Activated CD8-positive, alpha-beta memory T cell treated with anti-CD3 and anti-CD28 coated beads, Interleukin-2, amount 10 ng/mL, durations not matched to agents 7 days and 5 days (primary cell): ENCODE measurements at regions of chr4 and their contacts with region 1.

Region 1: DNA sequence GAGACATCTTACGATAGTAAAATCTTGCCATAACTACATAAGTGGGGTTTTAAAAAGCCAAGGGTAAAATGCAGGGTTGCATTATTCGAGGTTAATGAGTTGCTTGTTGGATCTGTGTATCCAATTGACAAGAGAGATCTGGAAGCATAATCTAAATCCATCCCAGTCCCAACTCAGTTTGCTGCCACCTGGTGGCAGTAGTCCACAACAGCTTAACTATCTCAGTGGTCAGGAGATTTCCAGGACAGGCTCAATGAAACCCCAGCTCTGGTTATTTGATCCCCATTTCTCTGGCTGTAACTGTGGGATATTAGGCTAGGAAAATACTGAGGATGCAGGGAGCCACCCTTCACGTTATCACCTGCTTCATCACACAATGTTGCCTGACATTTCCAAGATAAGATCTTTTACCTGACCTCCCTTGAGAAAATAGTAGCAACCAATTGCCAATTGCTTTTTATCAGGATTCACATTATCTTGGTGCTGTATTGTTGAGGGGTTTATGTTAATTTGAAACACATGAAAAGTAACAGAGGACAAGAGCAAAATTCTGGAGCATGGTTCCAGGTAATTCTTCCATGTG is 88.2 kb upstream of the TNIP3 start:
- DNase-seq: peak; percentile 77
- ATAC-seq: no peak
- H3K4me3 Mint-ChIP-seq: no peak overlapping the region
- H3K27ac Mint-ChIP-seq: peak overlapping the region; percentile 71
- H3K4me1 Mint-ChIP-seq: peaks cover 75% of the 10 kb centered on the region
- H3K27me3 Mint-ChIP-seq: no peaks in the 10 kb centered on the region

Region 2: DNA sequence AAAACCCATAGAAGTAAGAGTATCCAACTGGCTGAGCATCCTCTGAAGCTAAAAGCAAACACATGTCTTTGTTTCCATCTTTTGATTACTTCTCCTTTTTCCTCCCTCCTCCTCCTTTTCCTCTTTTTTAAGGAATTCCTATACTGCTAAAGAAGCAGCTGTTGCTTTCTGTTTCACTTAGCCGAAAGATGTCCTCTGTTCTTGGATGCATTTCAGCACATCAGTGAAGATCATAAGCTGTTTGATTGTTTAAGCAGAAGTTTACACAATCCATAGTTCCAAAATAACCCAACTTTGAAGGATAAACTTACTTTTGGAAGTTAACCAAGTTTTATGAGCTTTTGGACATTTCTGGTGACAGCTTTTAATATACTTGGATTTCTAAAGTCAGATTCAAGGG is 33.1 kb before region 1 on chr4:
- CTCF ChIA-PET with region 1: interaction called, 60 read pairs
- DNase-seq: no peak
- ATAC-seq: peak; percentile 18
- H3K4me3 Mint-ChIP-seq: peak overlapping the region; percentile 68
- H3K27ac Mint-ChIP-seq: peak overlapping the region; percentile 92
- H3K4me1 Mint-ChIP-seq: peaks cover 68% of the 10 kb centered on the region
- H3K27me3 Mint-ChIP-seq: no peaks in the 10 kb centered on the region

Region 3: GRCh38 chr4:121370729-121371325 is 118.5 kb after region 1 on chr4:
- CTCF ChIA-PET with region 1: no interaction called
- DNase-seq: peak; percentile 51
- ATAC-seq: no peak
- H3K4me3 Mint-ChIP-seq: no peak overlapping the region
- H3K27ac Mint-ChIP-seq: no peak overlapping the region
- H3K4me1 Mint-ChIP-seq: no peaks in the 10 kb centered on the region
- H3K27me3 Mint-ChIP-seq: peaks cover 32% of the 10 kb centered on the region

Region 4: DNA sequence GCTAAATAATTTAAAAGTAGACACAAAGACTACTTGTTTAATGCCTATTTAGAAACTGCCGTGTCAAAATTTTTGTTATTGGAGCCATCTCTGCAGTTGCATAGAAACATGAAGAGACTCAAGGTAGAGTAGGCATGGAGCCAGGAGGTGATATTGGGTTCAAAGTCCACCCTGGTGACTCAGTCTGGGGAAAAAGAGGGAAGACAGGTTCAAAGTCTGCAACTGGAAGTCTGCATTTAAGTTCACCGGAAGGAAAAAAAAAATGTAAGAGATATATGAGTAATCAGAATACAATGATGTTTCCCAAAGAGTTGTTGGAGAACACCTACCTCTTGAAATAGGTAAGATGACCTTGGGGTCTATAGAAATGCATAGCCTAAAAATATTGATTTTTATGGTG is 195.9 kb after region 1 on chr4:
- CTCF ChIA-PET with region 1: no interaction called
- DNase-seq: no peak
- ATAC-seq: no peak
- H3K4me3 Mint-ChIP-seq: no peak overlapping the region
- H3K27ac Mint-ChIP-seq: no peak overlapping the region
- H3K4me1 Mint-ChIP-seq: no peaks in the 10 kb centered on the region
- H3K27me3 Mint-ChIP-seq: peaks cover 34% of the 10 kb centered on the region

Region 5: GRCh38 chr4:121479783-121480182 is 227.5 kb after region 1 on chr4:
- CTCF ChIA-PET with region 1: no interaction called
- DNase-seq: no peak
- ATAC-seq: no peak
- H3K4me3 Mint-ChIP-seq: no peak overlapping the region
- H3K27ac Mint-ChIP-seq: no peak overlapping the region
- H3K4me1 Mint-ChIP-seq: peaks cover 2% of the 10 kb centered on the region
- H3K27me3 Mint-ChIP-seq: peaks cover 34% of the 10 kb centered on the region